Calu3 (cell line): ENCODE measurements at regions of chr1 and their contacts with region 1.

Region 1: GRCh38 chr1:233326811-233327650 is 493 bp upstream of the MAP3K21 start:
- DNase-seq: peak; percentile 100
- H3K4me3 Mint-ChIP-seq: peak overlapping the region; percentile 87
- H3K27ac Mint-ChIP-seq: peak overlapping the region; percentile 74
- H3K4me1 Mint-ChIP-seq: peaks cover 20% of the 10 kb centered on the region
- H3K27me3 Mint-ChIP-seq: no peaks in the 10 kb centered on the region
- CTCF ChIP-seq: no peak

Region 2: DNA sequence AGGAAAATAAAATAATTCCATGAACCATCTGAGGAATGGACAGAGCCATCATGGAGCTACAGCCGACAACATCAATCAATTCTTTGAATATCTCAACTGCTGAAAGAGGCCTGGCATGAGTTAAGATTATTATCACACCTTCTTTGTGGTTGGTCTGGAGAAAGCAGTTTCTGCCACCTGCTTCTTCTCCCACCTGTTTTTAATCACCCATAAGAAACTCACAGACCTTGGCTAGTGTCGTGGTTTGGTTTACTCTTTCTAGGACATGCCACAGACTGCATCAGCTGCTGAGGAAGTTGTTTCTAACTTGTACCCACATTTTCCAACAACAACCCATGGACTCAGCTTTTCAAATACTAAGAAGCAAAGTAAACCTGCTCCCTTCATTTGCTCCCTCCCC is 311.1 kb before region 1 on chr1:
- CTCF ChIA-PET with region 1: no interaction called
- intact Hi-C with region 1: no loop called
- DNase-seq: no peak
- H3K4me3 Mint-ChIP-seq: no peak overlapping the region
- H3K27ac Mint-ChIP-seq: no peak overlapping the region
- H3K4me1 Mint-ChIP-seq: no peaks in the 10 kb centered on the region
- H3K27me3 Mint-ChIP-seq: no peaks in the 10 kb centered on the region
- CTCF ChIP-seq: no peak

Region 3: DNA sequence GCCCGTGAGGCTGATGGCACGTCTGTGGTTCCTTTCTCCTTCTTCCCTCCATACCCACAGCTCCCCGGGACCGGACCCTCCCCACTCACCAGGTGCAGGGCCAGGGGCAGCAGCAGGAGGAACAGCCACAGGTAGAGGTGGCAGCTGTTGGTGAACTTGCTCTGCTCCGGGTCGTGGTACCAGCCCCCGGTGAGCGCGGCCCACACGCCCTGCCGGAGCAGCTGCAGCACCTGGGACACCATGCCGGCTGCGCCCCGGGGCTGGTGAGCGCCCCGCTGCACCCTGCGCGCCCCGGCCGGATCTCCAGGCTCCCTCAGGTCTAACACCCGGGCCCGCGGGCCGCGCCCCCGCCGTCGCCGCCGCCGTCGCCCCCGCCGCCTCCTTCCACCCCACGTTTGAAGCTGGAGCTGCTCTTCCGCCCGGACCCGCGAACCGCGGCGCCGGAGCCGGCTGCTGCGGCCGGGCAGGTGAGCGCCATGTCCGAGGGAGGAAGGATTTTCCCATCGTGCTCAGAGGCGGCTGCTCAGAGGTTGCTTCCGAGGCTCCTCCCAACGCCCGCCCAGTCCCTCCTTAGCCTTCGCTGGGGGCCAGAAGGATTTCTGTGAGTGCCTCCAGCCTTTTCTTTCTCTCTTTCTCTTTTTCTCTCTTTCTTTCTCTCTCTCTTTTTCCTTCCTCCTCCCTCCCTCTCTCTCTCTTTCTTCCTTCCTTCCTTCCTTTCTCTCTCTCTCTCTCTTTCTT is 31.6 kb before region 1 on chr1 and contains the start of gene PCNX2:
- CTCF ChIA-PET with region 1: no interaction called
- intact Hi-C with region 1: loop called (anchors 2 kb)
- DNase-seq: peak; percentile 82
- H3K4me3 Mint-ChIP-seq: peak within 1 kb of the TSS; percentile 87
- H3K27ac Mint-ChIP-seq: peak within 1 kb of the TSS; percentile 63
- H3K4me1 Mint-ChIP-seq: peaks cover 35% of the 10 kb centered on the region
- H3K27me3 Mint-ChIP-seq: no peaks in the 10 kb centered on the region
- CTCF ChIP-seq: no peak
- total RNA-seq, gene PCNX2: 50.7 and 63.4 TPM in 2 replicates

Region 4: DNA sequence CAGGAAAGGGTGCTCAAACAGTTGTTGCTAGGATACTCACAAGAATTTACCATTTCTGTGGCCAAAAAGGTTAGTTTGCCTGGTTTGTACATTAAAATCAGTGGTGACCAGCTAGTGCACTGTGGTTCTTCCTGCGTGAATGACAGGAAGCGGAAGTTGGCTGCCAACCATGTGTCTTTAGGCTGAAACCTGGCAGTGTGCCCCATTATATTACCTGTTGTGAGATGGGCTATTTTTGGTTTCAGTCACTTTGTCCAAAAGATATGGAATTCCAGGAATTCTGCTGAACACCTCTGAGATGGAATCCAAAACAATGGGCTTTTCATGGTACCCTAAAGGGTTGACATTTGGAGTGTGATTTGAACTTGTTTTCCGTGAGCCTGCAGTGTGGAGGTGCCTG is 14.1 kb after region 1 on chr1:
- CTCF ChIA-PET with region 1: interaction called, 3 read pairs
- intact Hi-C with region 1: loop called (anchors 1 kb)
- DNase-seq: peak; percentile 57
- H3K4me3 Mint-ChIP-seq: no peak overlapping the region
- H3K27ac Mint-ChIP-seq: peak overlapping the region; percentile 77
- H3K4me1 Mint-ChIP-seq: peaks cover 78% of the 10 kb centered on the region
- H3K27me3 Mint-ChIP-seq: no peaks in the 10 kb centered on the region
- CTCF ChIP-seq: no peak